Uterus (tissue), 4 donors: ENCODE measurements at regions of chr2 and their contacts with region 1.

Region 1: DNA sequence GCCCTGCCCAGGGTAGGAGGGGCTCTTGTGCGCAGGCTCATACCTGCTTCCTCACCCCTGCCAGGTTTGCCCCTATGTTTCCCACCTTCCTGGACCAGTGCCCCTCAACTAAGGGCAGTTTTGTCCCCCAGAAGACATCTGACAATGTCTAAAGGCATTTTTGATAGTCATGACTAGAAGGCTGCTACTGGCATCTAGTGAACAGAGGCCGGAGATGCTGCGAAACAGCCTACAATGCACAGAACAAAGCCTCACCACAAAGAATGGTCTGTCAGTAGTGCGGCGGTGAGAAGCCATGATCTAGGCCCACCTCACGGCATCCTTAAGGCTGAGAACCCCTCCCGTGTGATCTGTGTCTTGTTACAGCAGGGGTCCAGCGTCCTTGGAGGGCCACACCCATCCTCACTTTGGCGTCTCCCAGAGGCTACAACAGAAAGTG is 96.0 kb downstream of the TMEM17 start:
- DNase-seq: no peak
- H3K4me3 ChIP-seq: no peak overlapping the region
- H3K27ac ChIP-seq: peak overlapping the region; percentile 86 to 92
- H3K4me1 ChIP-seq: peaks cover 0 to 3% of the 10 kb centered on the region in 2 donors
- H3K27me3 ChIP-seq: no peaks in the 10 kb centered on the region
- CTCF ChIP-seq: no peak
- POLR2A ChIP-seq: no peak

Region 2: GRCh38 chr2:61910603-61911002 is 499.4 kb before region 1 on chr2:
- intact Hi-C with region 1: loop called (anchors 5 kb)
- DNase-seq: no peak
- H3K4me3 ChIP-seq: no peak overlapping the region
- H3K27ac ChIP-seq: no peak overlapping the region
- H3K4me1 ChIP-seq: peaks cover 0 to 3% of the 10 kb centered on the region in 2 donors
- H3K27me3 ChIP-seq: no peaks in the 10 kb centered on the region
- CTCF ChIP-seq: peak in 1 of 4 experiments; percentile 9
- POLR2A ChIP-seq: no peak

Region 3: GRCh38 chr2:61993444-61994024 is 416.5 kb before region 1 on chr2:
- intact Hi-C with region 1: loop called (anchors 5 kb)
- DNase-seq: peak in 1 of 2 donors; percentile 26
- H3K4me3 ChIP-seq: no peak overlapping the region
- H3K27ac ChIP-seq: no peak overlapping the region
- H3K4me1 ChIP-seq: no peaks in the 10 kb centered on the region
- H3K27me3 ChIP-seq: no peaks in the 10 kb centered on the region
- CTCF ChIP-seq: peak; percentile 59 to 78 (median 70)
- POLR2A ChIP-seq: no peak